ENCODE measurements at regions of chr13 and their contacts with region 1.

Region 1: DNA sequence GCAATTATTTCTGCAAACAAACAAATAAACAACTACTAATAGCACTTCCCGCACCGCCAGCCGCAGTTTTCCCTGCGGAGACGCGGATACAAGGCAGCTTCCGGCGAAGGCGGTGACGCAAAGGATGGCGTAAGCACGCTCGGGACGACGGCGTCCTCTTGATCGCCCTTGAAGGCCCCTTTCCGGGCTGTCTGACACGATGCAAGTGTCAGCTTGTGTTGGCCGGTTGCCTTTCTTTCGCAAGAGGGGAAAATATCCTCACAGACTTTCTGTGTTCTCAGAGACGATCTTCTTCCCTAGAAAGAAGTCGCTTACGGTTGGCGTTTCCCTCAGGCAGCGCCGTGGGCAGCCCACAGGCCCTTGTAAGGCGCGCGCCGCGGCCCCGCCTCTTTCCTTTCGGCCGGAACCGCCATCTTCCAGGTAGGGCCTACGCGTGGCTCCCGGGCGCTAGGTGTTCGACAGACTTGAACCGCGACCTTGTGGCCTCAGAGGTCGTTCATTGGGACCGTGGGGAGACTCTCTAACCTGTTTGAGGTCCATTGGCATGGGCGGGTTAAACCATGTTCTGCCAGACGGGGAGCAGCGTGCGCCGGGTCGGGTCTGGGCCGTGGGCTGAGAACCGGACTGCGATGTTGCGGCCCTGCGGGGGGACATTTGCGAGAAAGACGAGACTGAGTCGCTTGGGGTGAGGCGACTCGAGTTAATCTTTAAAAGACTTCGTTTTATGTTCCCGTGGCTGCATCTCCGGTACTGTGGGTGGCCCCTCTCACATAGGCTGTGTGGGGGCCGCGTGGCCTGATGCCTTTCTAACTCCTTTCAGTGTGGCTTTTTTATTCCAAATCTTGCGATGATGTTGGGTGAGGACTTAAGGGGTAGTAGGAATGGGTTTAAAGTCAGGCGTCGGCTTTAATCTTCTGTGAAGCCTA is at the start of gene RPL21:
- DNase-seq: peak; percentile 98
- ATAC-seq: peak; percentile 99
- total RNA-seq, gene RPL21: 782 TPM

Region 2: DNA sequence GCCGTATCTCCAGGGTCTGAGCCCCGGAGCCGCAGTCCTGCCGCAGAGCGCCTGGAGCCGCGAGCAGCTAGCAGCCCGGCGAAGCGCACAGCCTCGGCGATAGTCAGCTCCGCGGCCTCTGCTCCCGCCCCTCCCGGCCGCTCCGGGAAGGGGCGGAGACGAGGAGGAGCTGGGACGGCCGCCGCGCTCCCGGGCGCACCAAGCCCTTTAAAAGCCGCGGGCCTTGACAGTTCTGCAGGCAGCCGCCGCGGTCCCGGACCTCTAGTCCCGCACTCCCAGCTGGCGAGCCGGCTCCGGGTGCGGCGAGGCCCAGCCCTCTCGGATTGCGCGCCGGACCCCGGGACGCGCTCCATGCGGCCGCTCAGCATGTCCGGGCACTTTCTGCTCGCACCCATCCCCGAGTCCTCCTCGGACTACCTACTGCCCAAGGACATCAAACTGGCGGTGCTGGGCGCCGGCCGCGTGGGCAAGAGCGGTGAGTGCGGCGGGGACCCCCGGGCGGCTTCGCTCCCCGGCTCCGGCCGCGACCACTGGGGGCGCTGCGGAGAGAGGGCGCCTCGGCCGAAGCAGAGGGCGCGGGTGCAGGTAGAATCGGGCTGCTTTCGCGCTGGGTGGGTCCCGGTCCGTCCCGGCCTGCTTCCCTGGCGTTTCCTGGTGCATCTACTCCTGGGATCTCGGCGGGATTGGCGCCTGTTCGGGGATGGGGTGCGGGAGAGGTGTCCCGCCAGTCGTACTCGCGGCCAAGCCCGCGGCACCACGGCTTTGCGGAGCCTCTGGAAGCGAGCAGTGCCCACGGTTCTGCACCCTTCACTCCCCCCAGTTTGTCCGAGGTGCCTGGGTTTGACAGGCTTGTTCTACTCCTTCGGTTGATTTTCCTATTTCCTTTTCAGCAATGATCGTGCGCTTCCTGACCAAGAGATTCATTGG is 19.4 kb after region 1 on chr13 and contains the start of gene RASL11A:
- intact Hi-C with region 1: loop called (anchors 1 kb)
- DNase-seq: peak; percentile 93
- ATAC-seq: peak; percentile 96
- total RNA-seq, gene RASL11A: 10.6 TPM